Vagina (tissue), 2 donors: ENCODE measurements at regions of chr18 and their contacts with region 1.

Region 1: GRCh38 chr18:3012964-3013804 is at the start of gene LPIN2:
- DNase-seq: peak in 1 of 2 donors; percentile 98
- H3K4me3 ChIP-seq: peak within 1 kb of the TSS; percentile 74 to 98
- H3K27ac ChIP-seq: peak within 1 kb of the TSS; percentile 98
- H3K4me1 ChIP-seq: peaks cover 49% of the 10 kb centered on the region
- H3K27me3 ChIP-seq: no peaks in the 10 kb centered on the region
- CTCF ChIP-seq: no peak
- POLR2A ChIP-seq: peak in 1 of 2 donors; percentile 63
- total RNA-seq, gene LPIN2: 19.4 TPM

Region 2: GRCh38 chr18:2797951-2798350 is 215.2 kb before region 1 on chr18:
- intact Hi-C with region 1: no loop called
- DNase-seq: no peak
- H3K4me3 ChIP-seq: no peak overlapping the region
- H3K27ac ChIP-seq: no peak overlapping the region
- H3K4me1 ChIP-seq: no peaks in the 10 kb centered on the region
- H3K27me3 ChIP-seq: no peaks in the 10 kb centered on the region
- CTCF ChIP-seq: no peak
- POLR2A ChIP-seq: no peak

Region 3: DNA sequence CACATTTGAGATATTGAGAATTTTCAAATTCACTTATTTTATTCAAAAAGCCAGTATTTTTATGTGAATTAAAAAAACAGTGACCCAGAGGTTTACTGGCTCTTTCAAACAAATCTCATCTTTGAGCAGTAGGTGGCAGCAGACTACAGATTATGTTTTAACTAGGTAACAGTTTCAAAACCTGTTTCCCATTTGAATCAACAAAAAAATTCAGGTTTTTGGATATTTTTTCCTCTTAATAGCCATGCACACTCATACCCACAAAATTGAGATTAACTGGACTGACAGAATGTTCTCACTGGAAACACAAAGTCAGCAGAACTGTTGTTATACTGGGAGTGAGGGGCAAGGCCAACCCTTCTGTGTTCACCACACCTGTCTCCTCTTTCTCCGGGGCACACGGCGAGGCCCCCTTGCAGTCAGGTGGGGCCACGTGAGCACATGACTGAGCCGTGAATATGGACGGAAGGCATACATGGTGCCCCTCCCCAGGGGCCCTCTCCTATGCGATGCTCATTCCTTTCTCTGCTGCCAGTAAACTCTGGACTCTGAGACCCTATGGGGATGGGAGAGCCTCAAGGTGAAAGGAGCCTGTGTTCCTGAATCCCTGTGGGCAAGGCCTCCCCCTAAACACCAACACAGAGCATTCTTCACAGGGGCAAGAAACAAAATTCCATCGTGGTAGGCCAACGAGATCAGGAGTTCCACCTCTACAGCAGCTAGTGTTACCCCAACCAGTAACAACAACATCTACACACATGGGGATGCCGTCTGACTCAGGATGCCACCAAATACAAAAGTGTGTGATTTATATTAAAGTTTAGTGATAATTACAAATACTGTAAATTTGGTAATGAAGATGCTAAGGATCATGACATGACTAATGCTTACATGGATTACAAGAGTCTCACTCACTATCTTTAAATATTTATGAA is 80.7 kb before region 1 on chr18:
- intact Hi-C with region 1: no loop called
- DNase-seq: no peak
- H3K4me3 ChIP-seq: no peak overlapping the region
- H3K27ac ChIP-seq: no peak overlapping the region
- H3K4me1 ChIP-seq: no peaks in the 10 kb centered on the region
- H3K27me3 ChIP-seq: no peaks in the 10 kb centered on the region
- CTCF ChIP-seq: peak; percentile 40 to 85 (median 57)
- POLR2A ChIP-seq: no peak

Region 4: GRCh38 chr18:2961821-2962220 is 51.4 kb before region 1 on chr18:
- intact Hi-C with region 1: loop called (anchors 2 kb)
- DNase-seq: no peak
- H3K4me3 ChIP-seq: no peak overlapping the region
- H3K27ac ChIP-seq: peak overlapping the region; percentile 70
- H3K4me1 ChIP-seq: peaks cover 30% of the 10 kb centered on the region
- H3K27me3 ChIP-seq: no peaks in the 10 kb centered on the region
- CTCF ChIP-seq: no peak
- POLR2A ChIP-seq: no peak

Region 5: DNA sequence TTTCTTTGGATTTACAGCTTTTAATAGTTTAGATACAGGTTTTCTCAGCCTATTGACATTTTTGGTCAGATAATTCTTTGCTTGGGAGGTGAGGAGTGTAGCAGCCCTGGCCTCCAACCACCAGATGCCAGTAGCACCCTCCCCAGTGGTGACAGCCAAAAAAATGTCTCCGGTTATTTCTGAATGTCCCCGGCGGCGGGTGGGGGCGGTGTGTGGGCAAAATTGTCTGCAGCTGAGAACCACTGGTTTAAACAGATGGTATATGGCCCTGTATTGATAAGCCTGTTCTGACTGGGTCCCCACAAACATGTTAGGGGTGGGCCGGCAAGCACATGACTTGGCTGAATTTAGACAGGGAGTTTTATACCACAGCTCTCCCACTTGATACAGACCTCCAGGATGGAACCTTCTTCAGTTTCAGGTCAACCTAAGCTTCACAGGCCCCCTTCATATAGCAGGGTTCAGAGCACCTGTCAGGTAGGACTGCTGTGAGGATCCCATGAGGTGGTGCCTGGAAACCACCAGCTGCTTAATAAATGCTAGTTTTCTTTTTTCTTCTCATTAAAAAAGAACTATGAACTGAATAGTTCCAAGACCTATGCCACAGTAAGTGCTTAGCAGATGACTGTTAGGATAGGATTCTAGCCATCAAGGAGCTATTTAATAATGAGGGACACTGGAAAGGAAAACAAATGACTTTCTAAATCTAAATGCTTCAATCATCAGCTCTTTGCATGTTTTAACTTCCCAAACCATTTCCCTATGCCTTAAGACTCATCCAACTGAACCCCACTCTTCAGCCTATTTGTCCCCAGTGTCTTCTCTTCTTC is 18.4 kb before region 1 on chr18:
- intact Hi-C with region 1: no loop called
- DNase-seq: no peak
- H3K4me3 ChIP-seq: no peak overlapping the region
- H3K27ac ChIP-seq: no peak overlapping the region
- H3K4me1 ChIP-seq: peaks cover 29% of the 10 kb centered on the region
- H3K27me3 ChIP-seq: no peaks in the 10 kb centered on the region
- CTCF ChIP-seq: no peak
- POLR2A ChIP-seq: no peak

Region 6: GRCh38 chr18:3062798-3063680 is 49.9 kb after region 1 on chr18:
- intact Hi-C with region 1: loop called (anchors 10 kb)
- DNase-seq: no peak
- H3K4me3 ChIP-seq: no peak overlapping the region
- H3K27ac ChIP-seq: no peak overlapping the region
- H3K4me1 ChIP-seq: no peaks in the 10 kb centered on the region
- H3K27me3 ChIP-seq: no peaks in the 10 kb centered on the region
- CTCF ChIP-seq: peak; percentile 40 to 70 (median 67)
- POLR2A ChIP-seq: no peak

Region 7: DNA sequence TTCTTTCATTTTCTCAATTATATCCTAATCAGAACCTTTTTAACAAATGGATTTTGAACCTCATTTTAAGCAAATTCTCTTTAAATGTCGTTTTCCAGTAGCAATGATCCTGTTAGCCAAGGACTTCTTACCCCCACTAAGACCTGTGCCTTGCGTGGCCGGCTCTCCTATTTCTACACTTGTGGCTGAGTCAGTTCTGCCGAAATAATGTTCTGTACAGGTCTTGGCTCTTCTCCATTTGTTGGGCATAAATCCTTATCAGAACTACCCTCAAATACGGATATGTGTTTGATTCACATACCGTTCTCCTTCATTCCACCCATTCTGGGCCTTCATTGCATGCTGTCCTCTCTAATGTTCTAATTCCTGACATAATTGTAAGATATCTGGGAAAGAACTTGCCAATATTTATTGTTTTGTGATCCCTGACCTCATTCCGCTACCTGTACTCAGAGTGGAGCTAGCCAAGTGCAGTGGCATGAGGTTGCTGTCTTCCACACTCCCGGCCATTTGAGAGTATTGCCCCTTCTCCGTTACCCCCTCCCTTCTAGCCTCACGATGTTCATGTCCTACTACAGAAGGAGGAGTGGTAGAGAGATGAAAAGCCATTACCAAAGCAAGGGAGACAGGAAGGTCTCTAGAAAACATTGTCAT is 127.9 kb after region 1 on chr18:
- intact Hi-C with region 1: no loop called
- DNase-seq: no peak
- H3K4me3 ChIP-seq: no peak overlapping the region
- H3K27ac ChIP-seq: no peak overlapping the region
- H3K4me1 ChIP-seq: no peaks in the 10 kb centered on the region
- H3K27me3 ChIP-seq: no peaks in the 10 kb centered on the region
- CTCF ChIP-seq: no peak
- POLR2A ChIP-seq: no peak

Region 8: GRCh38 chr18:3245853-3246634 is 232.9 kb after region 1 on chr18:
- intact Hi-C with region 1: loop called (anchors 10 kb)
- DNase-seq: peak in 1 of 2 donors; percentile 95
- H3K4me3 ChIP-seq: peak overlapping the region; percentile 93 to 98
- H3K27ac ChIP-seq: peak overlapping the region; percentile 98
- H3K4me1 ChIP-seq: peaks cover 39% of the 10 kb centered on the region
- H3K27me3 ChIP-seq: no peaks in the 10 kb centered on the region
- CTCF ChIP-seq: peak; percentile 79 to 88 (median 87)
- POLR2A ChIP-seq: no peak